Left cardiac atrium (tissue), 4 donors: ENCODE measurements at regions of chr22 and their contacts with region 1.

Region 1: DNA sequence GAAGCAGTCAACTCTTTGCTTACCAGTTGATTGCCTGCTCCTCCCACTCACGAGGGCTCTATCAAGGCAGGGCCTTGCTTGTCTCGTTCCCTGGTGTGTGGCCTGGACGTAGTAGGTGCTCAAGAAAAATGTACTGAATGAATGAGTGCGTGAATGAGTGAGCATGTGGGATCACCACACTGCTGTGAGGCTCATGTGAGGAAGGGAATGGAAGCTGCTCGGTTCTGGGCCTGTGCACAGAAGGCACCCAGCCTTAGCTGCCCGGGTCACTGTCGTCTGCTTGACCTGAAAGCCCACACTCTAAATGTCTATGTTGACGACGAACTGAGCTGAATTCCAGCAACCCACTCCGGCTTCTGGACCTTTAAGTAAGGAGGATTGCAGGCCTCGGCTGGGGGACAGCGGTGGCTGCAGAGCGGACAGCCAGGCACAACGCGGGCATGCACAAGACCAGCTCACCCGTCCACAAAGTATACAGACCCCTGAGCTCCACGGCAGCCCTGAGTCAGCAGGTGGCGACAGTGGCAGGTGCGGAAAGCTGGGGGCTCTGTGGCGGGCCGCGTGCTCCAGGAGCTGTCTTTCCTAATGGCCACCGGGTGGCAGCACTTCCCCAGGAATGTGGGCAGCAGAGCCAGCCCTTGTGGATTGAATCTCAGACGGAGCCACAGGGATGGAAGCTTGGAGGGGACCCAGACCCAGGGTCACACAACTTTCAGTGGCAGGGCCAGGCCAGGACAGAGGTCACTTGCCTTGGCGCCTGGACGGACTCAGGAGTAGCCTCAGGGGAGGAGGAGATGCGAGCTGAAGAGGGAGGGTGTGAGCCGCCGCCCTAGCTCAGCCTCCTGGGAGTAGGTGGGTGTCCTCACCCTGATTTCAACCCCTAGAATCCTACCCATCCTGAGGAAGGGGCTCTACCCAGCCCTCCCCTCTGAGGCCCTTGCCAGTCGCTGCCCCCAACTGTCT is 5.0 kb upstream of the PICK1 start:
- DNase-seq: peak; percentile 89
- ATAC-seq: peak; percentile 73 to 76

Region 2: GRCh38 chr22:37745548-37746365 is 306.4 kb before region 1 on chr22:
- intact Hi-C with region 1: no loop called
- DNase-seq: peak; percentile 94
- ATAC-seq: peak; percentile 70 to 86

Region 3: GRCh38 chr22:37887610-37888378 is 164.4 kb before region 1 on chr22:
- intact Hi-C with region 1: no loop called
- DNase-seq: no peak
- ATAC-seq: peak; percentile 78 to 80

Region 4: GRCh38 chr22:38104084-38104483 is 51.9 kb after region 1 on chr22:
- intact Hi-C with region 1: loop called in 1 of 2 experiments (anchors 10 kb)
- DNase-seq: no peak
- ATAC-seq: no peak

Region 5: DNA sequence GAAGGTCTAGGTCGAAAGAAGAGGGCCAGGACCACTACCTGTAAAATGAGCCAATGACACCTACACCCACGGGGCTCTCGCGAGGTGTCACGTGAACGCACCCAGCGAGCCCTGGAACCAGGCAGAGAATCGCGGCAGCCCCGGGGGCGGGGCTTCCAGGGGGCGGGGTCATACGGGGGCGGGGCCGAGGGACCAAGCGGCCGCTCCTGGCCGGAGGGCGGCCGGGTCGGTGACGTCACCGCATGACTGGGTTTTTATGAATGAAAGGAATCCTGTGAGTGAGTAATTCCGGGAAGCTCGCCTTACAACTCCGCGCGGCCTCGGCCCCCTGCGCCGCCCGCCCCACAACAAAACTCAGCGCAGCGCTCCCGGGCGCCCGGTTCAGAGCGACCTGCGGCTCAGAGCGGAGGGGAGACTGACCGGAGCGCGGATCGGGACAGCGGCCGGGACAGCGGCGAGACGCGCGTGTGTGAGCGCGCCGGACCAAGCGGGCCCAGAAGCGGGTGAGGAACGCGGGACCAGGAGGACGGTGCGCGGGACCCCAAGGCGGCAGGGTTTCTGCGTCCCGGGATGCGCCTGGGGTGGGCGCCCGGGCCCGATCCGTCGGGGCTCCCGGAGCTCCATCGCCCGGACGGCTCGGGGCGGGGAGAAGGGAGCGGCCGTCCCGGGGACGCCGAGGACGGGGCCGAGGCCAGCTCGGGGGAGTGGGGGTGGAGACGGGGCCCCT is 149.7 kb after region 1 on chr22 and contains the start of gene MAFF:
- intact Hi-C with region 1: no loop called
- DNase-seq: peak; percentile 98
- ATAC-seq: peak; percentile 83 to 85
- total RNA-seq, gene MAFF: 9.4 to 27.8 TPM

Region 6: DNA sequence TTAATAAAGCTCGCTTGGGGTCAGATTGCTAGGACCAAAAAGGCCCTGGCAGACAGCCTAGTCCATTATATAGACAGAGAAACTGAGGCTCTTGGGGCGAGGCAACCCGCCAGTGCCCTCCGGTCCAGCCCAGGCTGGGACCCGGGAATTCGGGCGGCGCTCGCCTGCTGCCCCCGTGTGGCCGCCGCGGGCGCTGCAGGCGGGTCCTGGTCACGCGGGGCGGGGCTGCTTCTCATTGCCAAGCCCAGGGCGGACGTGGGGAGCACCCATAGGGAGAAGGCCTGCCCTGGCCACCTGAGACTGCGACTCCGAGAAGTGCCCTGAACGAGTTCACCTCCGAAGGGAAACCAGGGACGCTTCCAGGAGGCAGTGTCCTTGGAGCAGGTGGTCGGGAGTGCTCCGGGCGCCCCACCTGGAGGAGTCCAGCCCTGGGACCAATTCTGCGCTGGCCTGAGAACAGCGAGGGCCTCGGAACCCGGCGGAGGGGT is 301.0 kb after region 1 on chr22:
- intact Hi-C with region 1: loop called in 1 of 2 experiments (anchors 5 kb)
- DNase-seq: peak; percentile 69
- ATAC-seq: peak; percentile 84 to 86